CD4-positive, alpha-beta T cell (primary cell): ENCODE measurements at regions of chr10 and their contacts with region 1.

Region 1: GRCh38 chr10:61896854-61897661 is 4.4 kb upstream of the ARID5B start:
- DNase-seq: peak in 12 of 14 experiments; percentile 16 to 89 (median 36)
- ATAC-seq: peak; percentile 53
- H3K4me3 ChIP-seq: peak overlapping the region; percentile 48
- H3K4me3 Mint-ChIP-seq: peak overlapping the region; percentile 85
- H3K27ac ChIP-seq: no peak overlapping the region
- H3K27ac Mint-ChIP-seq: peak overlapping the region; percentile 72
- H3K4me1 ChIP-seq: peaks cover 19% of the 10 kb centered on the region
- H3K4me1 Mint-ChIP-seq: peaks cover 33% of the 10 kb centered on the region
- H3K27me3 ChIP-seq: no peaks in the 10 kb centered on the region
- H3K27me3 Mint-ChIP-seq: no peaks in the 10 kb centered on the region
- CTCF ChIP-seq: peak; percentile 75

Region 2: GRCh38 chr10:59906417-59907202 is 1990.4 kb before region 1 on chr10 and contains the start of gene CCDC6:
- CTCF ChIA-PET with region 1: no interaction called
- POLR2A ChIA-PET with region 1: interaction called, 5 read pairs
- intact Hi-C with region 1: loop called in 1 of 2 experiments (anchors 10 kb)
- DNase-seq: peak; percentile 85 to 96 (median 92)
- ATAC-seq: peak; percentile 89
- H3K4me3 ChIP-seq: peak within 1 kb of the TSS; percentile 86
- H3K4me3 Mint-ChIP-seq: peak within 1 kb of the TSS; percentile 91
- H3K27ac ChIP-seq: peak within 1 kb of the TSS; percentile 68 to 83
- H3K27ac Mint-ChIP-seq: peak within 1 kb of the TSS; percentile 89
- H3K4me1 ChIP-seq: peaks cover 39% of the 10 kb centered on the region
- H3K4me1 Mint-ChIP-seq: peaks cover 62% of the 10 kb centered on the region
- H3K27me3 ChIP-seq: no peaks in the 10 kb centered on the region
- H3K27me3 Mint-ChIP-seq: no peaks in the 10 kb centered on the region
- CTCF ChIP-seq: peak; percentile 83
- total RNA-seq, gene CCDC6: 21.6 to 22.1 TPM

Region 3: GRCh38 chr10:61721431-61721830 is 175.6 kb before region 1 on chr10:
- CTCF ChIA-PET with region 1: no interaction called
- POLR2A ChIA-PET with region 1: no interaction called
- intact Hi-C with region 1: no loop called
- DNase-seq: no peak
- ATAC-seq: no peak
- H3K4me3 ChIP-seq: no peak overlapping the region
- H3K4me3 Mint-ChIP-seq: no peak overlapping the region
- H3K27ac ChIP-seq: no peak overlapping the region
- H3K27ac Mint-ChIP-seq: no peak overlapping the region
- H3K4me1 ChIP-seq: no peaks in the 10 kb centered on the region
- H3K4me1 Mint-ChIP-seq: no peaks in the 10 kb centered on the region
- H3K27me3 ChIP-seq: peaks cover 0 to 8% of the 10 kb centered on the region in 2 experiments
- H3K27me3 Mint-ChIP-seq: peaks cover 10% of the 10 kb centered on the region
- CTCF ChIP-seq: no peak

Region 4: GRCh38 chr10:61943674-61944410 is 46.8 kb after region 1 on chr10:
- CTCF ChIA-PET with region 1: interaction called, 8 read pairs
- POLR2A ChIA-PET with region 1: interaction called, 27 read pairs
- intact Hi-C with region 1: loop called in 1 of 2 experiments (anchors 1 kb)
- DNase-seq: peak in 5 of 14 experiments; percentile 9 to 79 (median 63)
- ATAC-seq: peak; percentile 73
- H3K4me3 ChIP-seq: peak overlapping the region; percentile 38
- H3K4me3 Mint-ChIP-seq: peak overlapping the region; percentile 59
- H3K27ac ChIP-seq: peak overlapping the region in 1 of 2 donors; percentile 71
- H3K27ac Mint-ChIP-seq: peak overlapping the region; percentile 82
- H3K4me1 ChIP-seq: peaks cover 12% of the 10 kb centered on the region
- H3K4me1 Mint-ChIP-seq: peaks cover 55% of the 10 kb centered on the region
- H3K27me3 ChIP-seq: no peaks in the 10 kb centered on the region
- H3K27me3 Mint-ChIP-seq: no peaks in the 10 kb centered on the region
- CTCF ChIP-seq: peak; percentile 22

Region 5: DNA sequence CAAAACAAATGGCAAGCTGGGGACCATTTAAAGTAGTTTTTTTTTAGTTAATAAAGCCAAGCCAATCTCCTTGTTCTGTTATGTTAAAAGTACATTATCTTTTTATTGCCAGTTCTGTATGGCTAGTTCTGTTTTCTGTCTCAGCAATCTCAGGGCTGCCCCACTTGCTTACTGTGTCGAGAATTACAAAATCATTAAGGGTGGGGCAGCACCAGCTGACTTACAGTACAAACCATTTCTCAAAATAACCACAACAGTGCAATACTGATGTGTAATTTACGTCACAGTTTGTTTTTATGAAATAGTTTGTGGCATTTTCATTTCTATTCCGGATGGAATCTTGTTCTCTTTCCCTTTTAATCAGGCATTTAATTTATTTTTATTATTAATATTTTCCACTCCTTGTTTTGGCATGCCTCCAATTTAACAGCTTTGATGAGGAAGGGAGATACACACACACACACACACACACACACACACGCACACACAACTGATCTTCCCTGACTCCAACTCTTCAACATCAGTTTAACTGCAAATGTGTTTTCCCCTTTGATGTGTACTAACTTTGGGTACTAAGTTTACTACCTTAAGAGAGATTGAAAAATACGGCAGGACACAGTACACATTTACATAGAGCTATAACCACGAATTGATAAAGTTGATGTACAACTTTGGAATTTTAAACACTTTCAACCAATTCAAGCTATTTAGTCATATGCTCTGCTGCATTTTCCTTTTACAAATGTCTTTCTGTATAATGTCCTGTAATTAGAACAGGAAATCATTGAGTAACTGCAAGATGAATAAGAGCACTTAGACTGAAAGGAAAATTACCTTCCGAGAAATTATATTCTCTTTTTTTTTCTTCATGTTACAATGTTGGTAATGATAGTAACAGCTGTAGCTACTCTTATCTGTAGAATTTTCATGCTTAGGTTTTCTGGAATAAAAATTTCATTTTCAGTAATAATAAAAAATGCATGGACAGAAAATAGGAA is 95.9 kb after region 1 on chr10:
- CTCF ChIA-PET with region 1: interaction called, 14 read pairs
- POLR2A ChIA-PET with region 1: interaction called, 51 read pairs
- intact Hi-C with region 1: loop called (anchors 1 to 5 kb)
- DNase-seq: peak in 12 of 14 experiments; percentile 29 to 89 (median 53)
- ATAC-seq: peak; percentile 83
- H3K4me3 ChIP-seq: peak overlapping the region; percentile 15
- H3K4me3 Mint-ChIP-seq: peak overlapping the region; percentile 31
- H3K27ac ChIP-seq: peak overlapping the region; percentile 62 to 64
- H3K27ac Mint-ChIP-seq: peak overlapping the region; percentile 85
- H3K4me1 ChIP-seq: peaks cover 14% of the 10 kb centered on the region
- H3K4me1 Mint-ChIP-seq: peaks cover 73% of the 10 kb centered on the region
- H3K27me3 ChIP-seq: no peaks in the 10 kb centered on the region
- H3K27me3 Mint-ChIP-seq: no peaks in the 10 kb centered on the region
- CTCF ChIP-seq: no peak

Region 6: DNA sequence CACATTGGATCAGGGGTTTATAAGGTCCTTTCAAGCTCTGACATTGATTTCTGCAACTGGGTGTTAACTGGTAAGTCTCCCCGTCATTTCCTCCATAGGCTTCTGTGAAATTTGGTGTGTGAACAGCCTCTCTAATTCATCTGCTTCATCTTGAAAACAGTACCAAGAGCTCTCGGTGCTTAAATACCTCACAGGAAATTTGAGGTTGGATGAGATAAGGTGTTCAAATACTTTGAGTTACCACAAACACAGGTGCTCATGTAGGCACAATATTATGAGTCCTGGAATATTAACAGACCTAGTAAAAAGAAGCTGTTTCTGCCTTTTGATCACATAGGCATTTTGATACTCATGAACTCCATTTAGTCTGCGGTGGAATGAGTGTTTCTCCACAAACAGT is 286.4 kb after region 1 on chr10:
- CTCF ChIA-PET with region 1: interaction called, 3 read pairs
- POLR2A ChIA-PET with region 1: interaction called, 27 read pairs
- intact Hi-C with region 1: loop called in 1 of 2 experiments (anchors 1 kb)
- DNase-seq: peak in 10 of 14 experiments; percentile 16 to 92 (median 37)
- ATAC-seq: peak; percentile 85
- H3K4me3 ChIP-seq: no peak overlapping the region
- H3K4me3 Mint-ChIP-seq: peak overlapping the region; percentile 21
- H3K27ac ChIP-seq: peak overlapping the region; percentile 37 to 38
- H3K27ac Mint-ChIP-seq: peak overlapping the region; percentile 86
- H3K4me1 ChIP-seq: peaks cover 45% of the 10 kb centered on the region
- H3K4me1 Mint-ChIP-seq: peaks cover 91% of the 10 kb centered on the region
- H3K27me3 ChIP-seq: no peaks in the 10 kb centered on the region
- H3K27me3 Mint-ChIP-seq: no peaks in the 10 kb centered on the region
- CTCF ChIP-seq: no peak

Region 7: DNA sequence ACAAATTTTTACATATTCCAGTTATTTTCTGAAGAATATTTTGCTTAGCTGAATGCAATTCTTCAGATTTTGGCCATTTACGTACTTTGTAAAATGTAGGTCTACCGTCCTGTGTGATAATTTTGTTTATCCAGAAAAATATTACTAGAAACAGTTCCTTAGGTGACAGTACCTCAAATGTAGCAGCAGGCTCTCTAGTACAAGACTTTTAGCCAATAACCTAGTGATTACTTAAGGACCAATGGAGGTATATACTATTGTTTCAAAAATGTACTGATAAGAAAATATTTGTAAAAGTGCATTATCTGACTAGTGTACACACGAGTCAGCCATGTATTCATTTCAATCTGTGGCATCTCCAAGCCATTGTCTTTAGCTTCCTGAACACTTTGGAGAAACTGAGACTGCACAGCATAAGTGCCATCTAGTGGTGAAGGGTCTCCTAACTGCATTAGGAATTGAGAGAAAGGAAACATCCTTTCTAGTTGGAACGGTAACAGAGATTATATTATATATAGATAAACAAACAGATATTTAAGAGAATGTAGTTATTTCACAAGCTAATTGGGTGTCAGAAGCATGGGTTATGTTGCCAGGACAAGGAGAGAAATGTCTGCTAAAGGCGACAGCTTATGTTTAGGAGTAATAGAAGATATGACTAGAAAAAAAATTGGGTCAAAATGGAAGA is 347.9 kb after region 1 on chr10:
- CTCF ChIA-PET with region 1: interaction called, 9 read pairs
- POLR2A ChIA-PET with region 1: interaction called, 7 read pairs
- intact Hi-C with region 1: loop called (anchors 1 to 2 kb)
- DNase-seq: peak in 11 of 14 experiments; percentile 15 to 82 (median 35)
- ATAC-seq: peak; percentile 92
- H3K4me3 ChIP-seq: no peak overlapping the region
- H3K4me3 Mint-ChIP-seq: peak overlapping the region; percentile 5
- H3K27ac ChIP-seq: no peak overlapping the region
- H3K27ac Mint-ChIP-seq: peak overlapping the region; percentile 18
- H3K4me1 ChIP-seq: peaks cover 4% of the 10 kb centered on the region
- H3K4me1 Mint-ChIP-seq: peaks cover 39% of the 10 kb centered on the region
- H3K27me3 ChIP-seq: no peaks in the 10 kb centered on the region
- H3K27me3 Mint-ChIP-seq: no peaks in the 10 kb centered on the region
- CTCF ChIP-seq: peak; percentile 92

Region 8: GRCh38 chr10:62414359-62414758 is 517.3 kb after region 1 on chr10:
- CTCF ChIA-PET with region 1: no interaction called
- POLR2A ChIA-PET with region 1: no interaction called
- intact Hi-C with region 1: loop called in 1 of 2 experiments (anchors 10 kb)
- DNase-seq: peak in 2 of 14 experiments; percentile 4 to 9
- ATAC-seq: no peak
- H3K4me3 ChIP-seq: no peak overlapping the region
- H3K4me3 Mint-ChIP-seq: no peak overlapping the region
- H3K27ac ChIP-seq: no peak overlapping the region
- H3K27ac Mint-ChIP-seq: no peak overlapping the region
- H3K4me1 ChIP-seq: no peaks in the 10 kb centered on the region
- H3K4me1 Mint-ChIP-seq: no peaks in the 10 kb centered on the region
- H3K27me3 ChIP-seq: no peaks in the 10 kb centered on the region
- H3K27me3 Mint-ChIP-seq: peaks cover 44% of the 10 kb centered on the region
- CTCF ChIP-seq: peak; percentile 12